Activated B cell treated with CpG ODN at 0.5 μM for 24 hours (primary cell): ENCODE measurements at regions of chr14 and their contacts with region 1.

Region 1: GRCh38 chr14:61503167-61503801 is 181.9 kb downstream of the PRKCH start:
- DNase-seq: no peak
- ATAC-seq: peak; percentile 88
- H3K4me3 Mint-ChIP-seq: peak overlapping the region; percentile 82
- H3K27ac Mint-ChIP-seq: peak overlapping the region; percentile 99
- H3K4me1 Mint-ChIP-seq: peaks cover 97% of the 10 kb centered on the region
- H3K27me3 Mint-ChIP-seq: no peaks in the 10 kb centered on the region
- CTCF ChIP-seq: no peak

Region 2: GRCh38 chr14:61461808-61462275 is 41.4 kb before region 1 on chr14:
- CTCF ChIA-PET with region 1: interaction called, 4 read pairs
- POLR2A ChIA-PET with region 1: interaction called, 3 read pairs
- intact Hi-C with region 1: loop called (anchors 1 kb)
- DNase-seq: no peak
- ATAC-seq: peak; percentile 68
- H3K4me3 Mint-ChIP-seq: no peak overlapping the region
- H3K27ac Mint-ChIP-seq: no peak overlapping the region
- H3K4me1 Mint-ChIP-seq: peaks cover 16% of the 10 kb centered on the region
- H3K27me3 Mint-ChIP-seq: no peaks in the 10 kb centered on the region
- CTCF ChIP-seq: no peak

Region 3: DNA sequence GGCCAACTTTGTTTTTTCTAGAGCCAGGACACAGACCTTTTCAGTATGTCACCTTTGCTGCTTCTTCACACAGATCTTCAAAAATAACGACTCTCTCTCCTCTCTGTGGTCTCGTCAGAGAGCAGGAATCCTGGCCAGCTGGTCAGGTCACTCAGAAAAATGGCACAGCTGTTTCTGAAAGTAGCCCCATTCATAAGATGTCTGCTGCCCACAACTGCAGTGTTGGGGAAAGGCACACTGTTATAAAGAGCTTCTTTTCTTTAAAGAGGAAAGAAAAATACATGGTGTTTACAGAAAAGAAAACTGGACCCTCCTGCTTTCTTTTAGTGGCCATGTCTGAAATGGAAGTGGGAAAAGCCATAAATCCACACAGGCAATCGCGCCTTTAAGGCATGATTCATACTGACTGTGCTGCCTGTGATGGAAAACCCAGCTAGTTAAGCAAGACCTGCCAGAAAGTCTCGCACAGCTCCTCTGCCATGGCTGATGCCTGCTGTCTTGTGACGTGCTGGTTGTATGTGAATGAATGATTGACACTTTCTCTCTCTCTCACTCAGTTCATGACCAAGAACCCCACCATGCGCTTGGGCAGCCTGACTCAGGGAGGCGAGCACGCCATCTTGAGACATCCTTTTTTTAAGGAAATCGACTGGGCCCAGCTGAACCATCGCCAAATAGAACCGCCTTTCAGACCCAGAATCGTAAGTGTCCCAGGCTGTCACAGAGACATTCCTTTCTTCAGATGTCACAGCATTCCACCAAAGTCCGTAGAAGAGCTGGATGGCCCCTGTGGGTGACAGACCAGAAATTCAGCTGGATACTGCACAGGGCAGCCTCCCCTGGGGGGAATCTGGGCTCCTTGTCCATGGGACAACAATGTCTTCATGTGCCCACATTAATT is 44.2 kb after region 1 on chr14:
- CTCF ChIA-PET with region 1: interaction called, 3 read pairs
- POLR2A ChIA-PET with region 1: interaction called, 102 read pairs
- intact Hi-C with region 1: no loop called
- DNase-seq: no peak
- ATAC-seq: no peak
- H3K4me3 Mint-ChIP-seq: no peak overlapping the region
- H3K27ac Mint-ChIP-seq: no peak overlapping the region
- H3K4me1 Mint-ChIP-seq: peaks cover 24% of the 10 kb centered on the region
- H3K27me3 Mint-ChIP-seq: no peaks in the 10 kb centered on the region
- CTCF ChIP-seq: no peak

Region 4: GRCh38 chr14:61568572-61569131 is 65.4 kb after region 1 on chr14:
- CTCF ChIA-PET with region 1: interaction called, 8 read pairs
- POLR2A ChIA-PET with region 1: interaction called, 34 read pairs
- intact Hi-C with region 1: loop called (anchors 1 kb)
- DNase-seq: peak; percentile 74
- ATAC-seq: peak; percentile 89
- H3K4me3 Mint-ChIP-seq: peak overlapping the region; percentile 83
- H3K27ac Mint-ChIP-seq: peak overlapping the region; percentile 80
- H3K4me1 Mint-ChIP-seq: peaks cover 58% of the 10 kb centered on the region
- H3K27me3 Mint-ChIP-seq: no peaks in the 10 kb centered on the region
- CTCF ChIP-seq: no peak

Region 5: GRCh38 chr14:61719344-61720293 is 216.3 kb after region 1 on chr14:
- CTCF ChIA-PET with region 1: no interaction called
- POLR2A ChIA-PET with region 1: interaction called, 17 read pairs
- intact Hi-C with region 1: no loop called
- DNase-seq: no peak
- ATAC-seq: peak; percentile 40
- H3K4me3 Mint-ChIP-seq: peak overlapping the region; percentile 69
- H3K27ac Mint-ChIP-seq: peak overlapping the region; percentile 84
- H3K4me1 Mint-ChIP-seq: peaks cover 83% of the 10 kb centered on the region
- H3K27me3 Mint-ChIP-seq: no peaks in the 10 kb centered on the region
- CTCF ChIP-seq: no peak